CD4-positive, alpha-beta T cell (primary cell): ENCODE measurements at regions of chr17 and their contacts with region 1.

Region 1: GRCh38 chr17:57440522-57441485 is 184.5 kb downstream of the MSI2 start:
- DNase-seq: peak; percentile 33 to 78 (median 64)
- ATAC-seq: peak; percentile 78
- H3K4me3 ChIP-seq: no peak overlapping the region
- H3K4me3 Mint-ChIP-seq: peak overlapping the region; percentile 30
- H3K27ac ChIP-seq: peak overlapping the region; percentile 9 to 18
- H3K27ac Mint-ChIP-seq: peak overlapping the region; percentile 87
- H3K4me1 ChIP-seq: peaks cover 56% of the 10 kb centered on the region
- H3K4me1 Mint-ChIP-seq: peaks cover 86% of the 10 kb centered on the region
- H3K27me3 ChIP-seq: no peaks in the 10 kb centered on the region
- H3K27me3 Mint-ChIP-seq: no peaks in the 10 kb centered on the region
- CTCF ChIP-seq: peak; percentile 44

Region 2: GRCh38 chr17:57255776-57256681 is 184.8 kb before region 1 on chr17 and contains the start of gene MSI2:
- CTCF ChIA-PET with region 1: no interaction called
- POLR2A ChIA-PET with region 1: no interaction called
- intact Hi-C with region 1: loop called in 1 of 2 experiments (anchors 5 kb)
- DNase-seq: peak; percentile 82 to 96 (median 90)
- ATAC-seq: peak; percentile 71
- H3K4me3 ChIP-seq: peak within 1 kb of the TSS; percentile 74
- H3K4me3 Mint-ChIP-seq: peak within 1 kb of the TSS; percentile 99
- H3K27ac ChIP-seq: peak within 1 kb of the TSS; percentile 72 to 82
- H3K27ac Mint-ChIP-seq: peak within 1 kb of the TSS; percentile 98
- H3K4me1 ChIP-seq: peaks cover 35% of the 10 kb centered on the region
- H3K4me1 Mint-ChIP-seq: peaks cover 48% of the 10 kb centered on the region
- H3K27me3 ChIP-seq: no peaks in the 10 kb centered on the region
- H3K27me3 Mint-ChIP-seq: no peaks in the 10 kb centered on the region
- CTCF ChIP-seq: no peak
- total RNA-seq, gene MSI2: 129 to 132 TPM

Region 3: DNA sequence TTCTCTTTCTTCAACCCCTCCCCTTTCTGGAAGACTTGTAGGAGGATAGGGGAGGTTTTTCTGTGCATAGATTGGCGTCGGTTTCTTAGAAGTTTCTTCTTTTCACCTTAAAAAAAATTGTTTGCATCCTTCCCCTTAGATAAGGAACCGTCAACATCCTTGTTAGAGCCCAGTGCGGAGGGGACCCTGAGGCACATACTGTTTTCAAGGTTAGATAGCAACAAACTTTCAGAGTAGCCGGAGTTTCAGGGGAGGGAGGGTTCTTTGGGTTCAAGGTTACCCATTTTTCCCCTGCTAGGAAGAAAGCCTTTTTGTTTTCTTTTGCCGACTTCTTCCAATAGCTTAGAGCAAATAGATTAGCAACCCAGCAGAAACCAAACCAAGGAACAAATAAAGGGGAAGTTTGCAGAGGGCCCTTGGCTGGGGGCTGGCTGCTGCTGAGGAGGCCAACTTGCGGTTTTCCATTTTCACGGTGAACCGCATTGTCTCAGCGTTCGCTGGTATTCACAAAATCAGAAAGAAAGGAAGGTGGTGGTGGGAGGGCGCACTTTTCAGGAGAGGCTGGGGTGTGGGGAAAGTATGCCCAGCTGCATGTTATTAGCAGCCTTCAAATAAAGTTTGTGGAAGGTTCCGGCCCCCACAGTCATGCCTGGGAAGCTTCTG is 155.7 kb before region 1 on chr17:
- CTCF ChIA-PET with region 1: no interaction called
- POLR2A ChIA-PET with region 1: no interaction called
- intact Hi-C with region 1: loop called in 1 of 2 experiments (anchors 10 kb)
- DNase-seq: peak in 9 of 14 experiments; percentile 6 to 65 (median 22)
- ATAC-seq: peak; percentile 27
- H3K4me3 ChIP-seq: peak overlapping the region; percentile 17
- H3K4me3 Mint-ChIP-seq: peak overlapping the region; percentile 76
- H3K27ac ChIP-seq: peak overlapping the region in 1 of 2 donors; percentile 4
- H3K27ac Mint-ChIP-seq: peak overlapping the region; percentile 80
- H3K4me1 ChIP-seq: peaks cover 46% of the 10 kb centered on the region
- H3K4me1 Mint-ChIP-seq: peaks cover 80% of the 10 kb centered on the region
- H3K27me3 ChIP-seq: no peaks in the 10 kb centered on the region
- H3K27me3 Mint-ChIP-seq: no peaks in the 10 kb centered on the region
- CTCF ChIP-seq: no peak

Region 4: GRCh38 chr17:57499648-57500049 is 58.8 kb after region 1 on chr17:
- CTCF ChIA-PET with region 1: no interaction called
- POLR2A ChIA-PET with region 1: no interaction called
- intact Hi-C with region 1: loop called in 1 of 2 experiments (anchors 10 kb)
- DNase-seq: no peak
- ATAC-seq: no peak
- H3K4me3 ChIP-seq: no peak overlapping the region
- H3K4me3 Mint-ChIP-seq: no peak overlapping the region
- H3K27ac ChIP-seq: no peak overlapping the region
- H3K27ac Mint-ChIP-seq: no peak overlapping the region
- H3K4me1 ChIP-seq: peaks cover 10% of the 10 kb centered on the region
- H3K4me1 Mint-ChIP-seq: peaks cover 74% of the 10 kb centered on the region
- H3K27me3 ChIP-seq: no peaks in the 10 kb centered on the region
- H3K27me3 Mint-ChIP-seq: no peaks in the 10 kb centered on the region
- CTCF ChIP-seq: no peak